Astrocyte of the cerebellum (primary cell): ENCODE measurements at regions of chr12 and their contacts with region 1.

Region 1: DNA sequence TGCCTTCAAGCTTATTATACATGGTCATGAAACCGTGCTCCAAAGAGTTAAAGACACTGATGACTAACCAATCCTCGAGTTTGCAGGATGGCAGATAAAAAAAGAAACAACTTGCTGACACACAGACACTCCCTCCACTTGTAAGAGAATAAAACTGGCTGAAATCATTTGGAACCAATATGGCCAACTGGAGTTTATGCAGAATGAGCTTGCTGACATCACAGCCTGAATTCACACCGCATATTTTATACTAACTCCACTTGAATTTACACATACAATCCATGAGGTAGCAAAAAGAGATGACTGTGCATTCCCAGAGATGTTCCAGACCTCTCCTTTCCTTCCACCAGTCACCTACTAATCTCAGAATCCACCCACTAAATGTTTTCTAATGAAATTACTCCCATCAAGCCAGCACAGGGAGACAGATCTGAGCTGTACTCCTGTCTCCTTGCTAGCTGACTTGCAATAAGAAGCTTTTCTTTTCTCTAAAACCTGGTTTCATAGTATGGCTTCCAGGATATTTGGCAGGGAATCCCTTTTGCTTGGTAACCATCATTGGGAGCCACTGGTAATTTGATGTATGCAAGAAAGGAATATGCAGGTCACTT is 15.8 kb upstream of the PTPRR start:
- DNase-seq: no peak
- H3K4me3 ChIP-seq: no peak overlapping the region
- CTCF ChIP-seq: no peak

Region 2: GRCh38 chr12:70831538-70831937 is 104.8 kb before region 1 on chr12:
- in situ Hi-C with region 1: loop called (anchors 5 kb)
- DNase-seq: no peak
- H3K4me3 ChIP-seq: no peak overlapping the region
- CTCF ChIP-seq: no peak